ENCODE measurements at regions of chr7 and their contacts with region 1.

Region 1: DNA sequence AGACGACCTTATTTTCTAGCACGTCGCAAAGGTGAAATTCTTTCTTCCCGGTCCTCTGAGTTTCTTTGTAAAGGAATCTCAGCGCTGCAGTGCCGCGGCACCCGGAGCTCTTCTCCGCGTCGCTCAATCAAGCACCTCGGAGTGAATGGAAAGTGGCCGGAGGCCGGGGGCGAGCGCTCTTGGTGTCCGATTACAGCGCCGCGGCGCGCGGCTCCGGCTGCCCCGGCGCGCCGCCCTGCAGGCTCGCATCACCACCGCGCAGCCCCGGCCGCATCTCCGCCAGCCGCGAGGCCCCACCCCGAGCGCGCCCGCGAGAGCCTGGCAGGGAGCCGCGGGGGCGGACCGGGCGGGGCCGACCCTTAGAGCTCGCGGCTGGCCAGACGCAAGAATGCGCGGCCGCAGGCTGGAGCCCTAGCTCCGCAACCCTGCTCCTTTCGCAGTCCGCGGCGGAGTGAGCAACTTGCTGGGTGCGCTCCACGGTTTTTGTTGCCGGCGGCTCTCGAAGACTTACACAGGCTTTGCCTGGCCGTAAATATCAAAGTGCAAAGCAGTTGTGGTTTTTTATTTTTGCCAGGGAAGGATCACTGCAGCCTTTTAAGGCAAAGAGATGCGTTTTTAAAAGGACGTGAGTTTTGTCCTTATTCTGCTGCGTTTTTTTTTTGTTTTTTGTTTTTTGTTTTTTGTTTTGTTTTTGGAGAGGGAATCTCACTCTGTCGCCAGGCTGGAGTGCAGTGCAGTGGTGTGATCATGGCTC is at the start of gene SEMA3C:
- DNase-seq: peak; percentile 41 to 91 (median 80)
- H3K4me3 ChIP-seq: peak within 1 kb of the TSS; percentile 30 to 80 (median 67)
- H3K27ac ChIP-seq: peak within 1 kb of the TSS in 55 of 59 donors; percentile 6 to 89 (median 78)
- H3K27me3 ChIP-seq: peaks cover 0 to 9% (median 0%) of the 10 kb centered on the region in 45 donors
- CTCF ChIP-seq: peak in 28 of 56 donors; percentile 5 to 52 (median 29)
- total RNA-seq, gene SEMA3C: 7.3 to 40.9 (median 17.0) TPM

Region 2: GRCh38 chr7:80794631-80795573 is 124.2 kb before region 1 on chr7:
- intact Hi-C with region 1: loop called in 1 of 2 experiments (anchors 10 kb)
- DNase-seq: no peak
- H3K4me3 ChIP-seq: no peak overlapping the region
- H3K27ac ChIP-seq: no peak overlapping the region
- H3K27me3 ChIP-seq: no peaks in the 10 kb centered on the region
- CTCF ChIP-seq: no peak

Region 3: GRCh38 chr7:81029511-81029910 is 110.4 kb after region 1 on chr7:
- intact Hi-C with region 1: no loop called
- DNase-seq: no peak
- H3K4me3 ChIP-seq: no peak overlapping the region
- H3K27ac ChIP-seq: no peak overlapping the region
- H3K27me3 ChIP-seq: no peaks in the 10 kb centered on the region
- CTCF ChIP-seq: no peak